Left cardiac atrium (tissue), 4 donors: ENCODE measurements at regions of chr3 and their contacts with region 1.

Region 1: DNA sequence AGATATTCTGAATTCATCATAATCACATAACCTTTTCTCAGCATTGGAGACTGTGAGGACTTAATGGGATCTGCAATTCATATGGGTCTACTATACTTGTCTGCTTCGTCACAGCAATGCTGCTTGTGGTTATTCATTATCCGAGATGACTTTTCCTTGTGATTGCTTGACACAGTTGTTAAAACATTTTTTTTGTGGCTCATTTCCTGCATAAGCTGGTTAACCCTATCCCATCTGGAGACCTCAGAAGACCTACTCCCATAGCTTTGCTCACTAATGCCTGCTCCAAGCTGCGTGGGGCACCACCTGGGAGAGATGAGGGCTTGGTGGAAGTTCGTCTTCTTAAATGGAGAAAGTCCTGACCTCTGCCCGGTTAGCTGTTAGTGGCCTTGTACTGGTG is 360.8 kb downstream of the CHST2 start:
- DNase-seq: no peak
- ATAC-seq: no peak

Region 2: DNA sequence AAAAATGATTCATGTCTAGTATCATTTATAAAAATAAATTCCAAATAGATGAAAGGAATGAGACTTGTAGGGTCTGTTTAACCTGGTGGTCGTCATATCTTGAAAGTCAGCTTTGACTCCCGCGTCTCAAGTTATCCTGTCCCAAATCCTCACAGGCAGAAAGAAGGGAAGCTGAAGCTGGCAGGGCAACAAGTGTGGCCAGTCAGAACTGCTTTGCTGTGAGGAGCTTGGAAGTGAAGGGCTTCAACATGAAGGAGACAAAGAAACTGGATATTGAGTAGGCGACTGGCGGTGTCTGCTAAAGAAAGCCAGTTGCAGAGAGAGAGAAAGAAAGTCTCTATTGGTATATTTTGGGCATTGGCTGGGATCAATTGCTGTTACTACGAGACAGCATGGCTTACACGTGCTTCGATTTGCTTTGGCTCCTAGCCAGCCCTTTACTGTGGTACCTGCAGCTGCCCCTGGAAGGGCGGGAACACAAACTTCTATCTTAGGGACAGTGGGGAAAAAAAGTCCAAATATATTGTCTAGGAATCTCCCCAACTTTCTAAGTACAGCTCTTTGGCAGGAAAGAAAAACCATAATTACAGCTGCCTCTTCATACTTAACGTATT is 253.6 kb before region 1 on chr3:
- intact Hi-C with region 1: loop called in 1 of 2 experiments (anchors 5 kb)
- DNase-seq: no peak
- ATAC-seq: no peak

Region 3: GRCh38 chr3:143998266-143998665 is 517.9 kb after region 1 on chr3:
- intact Hi-C with region 1: no loop called
- DNase-seq: no peak
- ATAC-seq: peak in 1 of 2 donors; percentile 54